Right ventricle myocardium inferior (tissue), 1 donor: ENCODE measurements at regions of chr22 and their contacts with region 1.

Region 1: DNA sequence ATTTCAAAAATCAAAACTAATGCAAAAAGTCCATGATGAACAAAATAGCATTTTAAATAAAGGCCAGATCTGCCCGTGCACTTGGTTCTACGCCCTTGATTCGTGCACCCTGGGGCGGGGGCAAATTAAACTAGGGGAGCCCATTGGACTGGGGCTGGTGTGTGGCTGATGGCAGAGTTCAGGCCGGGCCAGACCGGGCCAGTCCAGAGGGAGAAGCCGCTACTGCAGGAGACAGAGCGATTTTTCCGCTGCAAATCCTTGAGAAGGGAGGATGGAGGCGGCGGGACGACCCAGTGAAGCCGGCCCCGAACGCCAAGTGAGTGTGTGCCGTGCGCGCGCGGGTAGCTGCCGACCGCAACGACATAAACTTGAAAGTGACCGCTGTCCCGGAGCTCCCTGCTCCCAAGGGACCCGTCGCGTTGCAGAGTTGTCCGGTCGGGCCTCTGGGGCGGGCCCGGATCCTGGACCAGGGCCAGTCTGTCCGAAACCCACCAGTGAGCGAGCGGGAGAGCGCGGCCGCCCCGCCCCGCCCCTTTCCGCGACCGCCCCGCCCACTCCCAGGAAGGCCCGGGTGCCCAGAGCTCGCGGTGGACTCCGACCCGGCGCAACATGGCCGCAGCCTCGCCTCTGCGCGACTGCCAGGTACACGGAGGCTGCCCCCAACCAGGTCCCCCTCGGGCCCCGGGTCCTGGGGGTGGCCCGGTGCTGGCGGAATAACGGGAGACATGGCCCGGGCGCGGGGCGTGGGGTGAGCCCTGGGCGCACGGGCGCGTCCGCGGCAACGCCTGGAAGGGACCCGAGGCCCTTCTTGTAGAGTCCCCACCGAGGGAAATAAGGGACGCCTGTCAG is at the start of gene TTC38:
- DNase-seq: peak; percentile 96
- ATAC-seq: peak; percentile 97
- total RNA-seq, gene TTC38: 23.8 TPM

Region 2: GRCh38 chr22:46250035-46250782 is 17.4 kb before region 1 on chr22 and contains the start of gene CDPF1:
- intact Hi-C with region 1: loop called (anchors 1 kb)
- DNase-seq: peak; percentile 96
- ATAC-seq: peak; percentile 95
- total RNA-seq, gene CDPF1: 6.2 TPM

Region 3: DNA sequence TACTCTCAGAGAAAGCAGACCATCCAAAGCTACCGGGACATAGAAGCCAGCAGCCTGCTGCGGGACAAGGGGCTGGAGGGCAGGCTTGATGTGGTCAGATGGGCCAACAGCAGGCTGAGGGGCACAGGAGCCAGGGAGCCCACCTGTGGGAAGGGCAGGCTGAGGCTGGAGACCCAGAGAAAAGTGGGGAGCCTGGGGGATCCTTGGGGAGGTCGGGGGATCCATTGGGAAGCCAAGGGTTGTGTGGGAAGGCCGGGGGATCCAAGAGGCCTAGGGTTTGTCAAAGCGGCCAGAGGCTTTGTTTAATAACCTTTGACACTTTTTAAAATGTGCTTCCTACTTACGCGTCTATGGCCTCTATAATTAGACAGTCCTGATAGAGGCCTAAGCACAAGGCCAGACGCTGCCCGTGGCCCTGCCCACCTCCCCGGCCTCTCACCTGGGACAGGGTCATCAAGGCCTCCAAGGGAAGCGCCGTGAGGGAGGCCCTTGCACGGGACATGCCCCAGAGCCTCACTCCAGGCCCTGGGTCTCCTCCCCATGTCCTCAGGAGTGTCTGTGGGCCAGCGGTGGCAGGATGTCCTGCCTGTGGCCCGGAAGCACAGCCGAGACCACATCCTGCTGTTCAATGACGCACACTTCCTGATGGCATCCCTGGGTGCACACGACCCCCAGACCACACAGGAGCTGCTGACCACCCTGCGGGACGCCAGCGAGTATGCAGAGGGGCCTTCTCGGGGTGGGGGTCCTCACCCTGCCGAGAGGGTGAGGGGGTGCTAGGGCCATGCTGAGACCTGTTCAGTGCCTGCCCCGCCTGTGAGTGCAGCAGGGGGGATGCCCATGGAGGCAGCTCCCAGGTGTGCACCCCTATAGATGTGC is 20.5 kb after region 1 on chr22:
- intact Hi-C with region 1: no loop called
- DNase-seq: peak; percentile 78
- ATAC-seq: peak; percentile 35

Region 4: GRCh38 chr22:46408568-46409506 is 141.2 kb after region 1 on chr22:
- intact Hi-C with region 1: no loop called
- DNase-seq: no peak
- ATAC-seq: no peak